CD8-positive, alpha-beta T cell (primary cell): ENCODE measurements at regions of chr7 and their contacts with region 1.

Region 1: GRCh38 chr7:73856941-73857340 is 4.0 kb upstream of the TMEM270 start:
- DNase-seq: no peak
- ATAC-seq: no peak
- H3K4me3 ChIP-seq: no peak overlapping the region
- H3K4me3 Mint-ChIP-seq: no peak overlapping the region
- H3K27ac ChIP-seq: no peak overlapping the region
- H3K27ac Mint-ChIP-seq: no peak overlapping the region
- H3K4me1 ChIP-seq: no peaks in the 10 kb centered on the region
- H3K4me1 Mint-ChIP-seq: peaks cover 8% of the 10 kb centered on the region
- H3K27me3 ChIP-seq: peaks cover 0 to 3% of the 10 kb centered on the region in 2 experiments
- H3K27me3 Mint-ChIP-seq: peaks cover 24% of the 10 kb centered on the region
- CTCF ChIP-seq: no peak

Region 2: GRCh38 chr7:73701357-73701995 is 155.5 kb before region 1 on chr7:
- CTCF ChIA-PET with region 1: no interaction called
- POLR2A ChIA-PET with region 1: no interaction called
- intact Hi-C with region 1: no loop called
- DNase-seq: peak in 4 of 9 experiments; percentile 29 to 53 (median 37)
- ATAC-seq: peak; percentile 43
- H3K4me3 ChIP-seq: no peak overlapping the region
- H3K4me3 Mint-ChIP-seq: no peak overlapping the region
- H3K27ac ChIP-seq: no peak overlapping the region
- H3K27ac Mint-ChIP-seq: no peak overlapping the region
- H3K4me1 ChIP-seq: peaks cover 4% of the 10 kb centered on the region
- H3K4me1 Mint-ChIP-seq: peaks cover 3% of the 10 kb centered on the region
- H3K27me3 ChIP-seq: no peaks in the 10 kb centered on the region
- H3K27me3 Mint-ChIP-seq: no peaks in the 10 kb centered on the region
- CTCF ChIP-seq: peak; percentile 41

Region 3: DNA sequence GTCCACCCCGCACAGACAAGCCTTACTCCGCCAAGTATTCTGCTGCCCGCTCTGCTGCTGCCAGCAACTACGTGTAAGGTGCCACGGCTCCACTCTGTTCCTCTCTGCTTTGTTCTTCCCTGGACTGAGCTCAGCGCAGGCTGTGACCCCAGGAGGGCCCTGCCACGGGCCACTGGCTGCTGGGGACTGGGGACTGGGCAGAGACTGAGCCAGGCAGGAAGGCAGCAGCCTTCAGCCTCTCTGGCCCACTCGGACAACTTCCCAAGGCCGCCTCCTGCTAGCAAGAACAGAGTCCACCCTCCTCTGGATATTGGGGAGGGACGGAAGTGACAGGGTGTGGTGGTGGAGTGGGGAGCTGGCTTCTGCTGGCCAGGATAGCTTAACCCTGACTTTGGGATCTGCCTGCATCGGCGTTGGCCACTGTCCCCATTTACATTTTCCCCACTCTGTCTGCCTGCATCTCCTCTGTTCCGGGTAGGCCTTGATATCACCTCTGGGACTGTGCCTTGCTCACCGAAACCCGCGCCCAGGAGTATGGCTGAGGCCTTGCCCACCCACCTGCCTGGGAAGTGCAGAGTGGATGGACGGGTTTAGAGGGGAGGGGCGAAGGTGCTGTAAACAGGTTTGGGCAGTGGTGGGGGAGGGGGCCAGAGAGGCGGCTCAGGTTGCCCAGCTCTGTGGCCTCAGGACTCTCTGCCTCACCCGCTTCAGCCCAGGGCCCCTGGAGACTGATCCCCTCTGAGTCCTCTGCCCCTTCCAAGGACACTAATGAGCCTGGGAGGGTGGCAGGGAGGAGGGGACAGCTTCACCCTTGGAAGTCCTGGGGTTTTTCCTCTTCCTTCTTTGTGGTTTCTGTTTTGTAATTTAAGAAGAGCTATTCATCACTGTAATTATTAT is 24.9 kb before region 1 on chr7:
- CTCF ChIA-PET with region 1: interaction called, 14 read pairs
- POLR2A ChIA-PET with region 1: no interaction called
- intact Hi-C with region 1: no loop called
- DNase-seq: no peak
- ATAC-seq: no peak
- H3K4me3 ChIP-seq: no peak overlapping the region
- H3K4me3 Mint-ChIP-seq: no peak overlapping the region
- H3K27ac ChIP-seq: no peak overlapping the region
- H3K27ac Mint-ChIP-seq: no peak overlapping the region
- H3K4me1 ChIP-seq: peaks cover 13% of the 10 kb centered on the region
- H3K4me1 Mint-ChIP-seq: peaks cover 20% of the 10 kb centered on the region
- H3K27me3 ChIP-seq: no peaks in the 10 kb centered on the region
- H3K27me3 Mint-ChIP-seq: peaks cover 12% of the 10 kb centered on the region
- CTCF ChIP-seq: no peak